Activated T-helper 2 cell treated with anti-CD3 and anti-CD28 coated beads, Interferon-gamma antibody, Interleukin-2, Interleukin-4, amounts not matched to agents 10 μg/mL and 5 μg/mL and 100 μg/mL, durations not matched to agents 14 hours and 24 hours and 36 hours (primary cell): ENCODE measurements at regions of chr14 and their contacts with region 1.

Region 1: GRCh38 chr14:50003213-50004031 is 110.5 kb downstream of the ARF6 start:
- DNase-seq: peak; percentile 76
- H3K4me3 Mint-ChIP-seq: peak overlapping the region; percentile 83
- H3K27ac Mint-ChIP-seq: peak overlapping the region; percentile 98
- H3K4me1 Mint-ChIP-seq: peaks cover 34% of the 10 kb centered on the region
- H3K27me3 Mint-ChIP-seq: no peaks in the 10 kb centered on the region

Region 2: DNA sequence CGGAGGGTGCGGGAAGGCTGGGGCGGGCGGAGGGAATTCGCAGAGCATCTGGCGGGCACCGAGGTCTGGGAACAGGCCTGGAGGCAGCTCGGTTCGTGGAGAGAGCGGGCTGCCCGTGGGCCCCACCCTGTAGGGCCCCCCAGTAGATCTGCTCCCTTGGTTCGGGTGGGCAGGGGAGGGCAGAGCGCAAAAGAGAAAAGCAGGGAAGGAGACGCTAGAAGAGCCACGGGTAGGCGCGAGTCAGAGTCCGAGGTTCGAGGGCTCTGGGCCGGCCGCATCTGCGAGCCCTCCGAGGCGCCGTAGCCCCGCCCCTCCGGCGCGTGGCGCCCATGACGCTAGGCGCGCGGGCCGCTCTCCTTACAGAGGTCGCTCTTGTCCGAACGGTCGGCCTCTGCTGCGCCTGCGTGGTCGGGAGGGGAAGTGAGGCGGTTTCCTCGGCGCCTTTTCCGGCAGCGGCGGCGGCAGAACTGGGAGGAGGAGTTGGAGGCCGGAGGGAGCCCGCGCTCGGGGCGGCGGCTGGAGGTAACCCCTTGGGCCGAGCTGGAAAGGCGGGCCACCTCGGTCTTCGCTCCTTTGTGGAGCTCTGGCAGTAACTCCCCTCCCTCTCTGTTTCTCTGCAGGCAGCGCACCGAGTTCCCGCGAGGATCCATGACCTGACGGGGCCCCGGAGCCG is 110.7 kb before region 1 on chr14 and contains the start of gene ARF6:
- intact Hi-C with region 1: loop called (anchors 1 kb)
- DNase-seq: peak; percentile 98
- H3K4me3 Mint-ChIP-seq: peak within 1 kb of the TSS; percentile 99
- H3K27ac Mint-ChIP-seq: peak within 1 kb of the TSS; percentile 99
- H3K4me1 Mint-ChIP-seq: peaks cover 26% of the 10 kb centered on the region
- H3K27me3 Mint-ChIP-seq: no peaks in the 10 kb centered on the region
- total RNA-seq, gene ARF6: 162 and 165 TPM in 2 replicates

Region 3: DNA sequence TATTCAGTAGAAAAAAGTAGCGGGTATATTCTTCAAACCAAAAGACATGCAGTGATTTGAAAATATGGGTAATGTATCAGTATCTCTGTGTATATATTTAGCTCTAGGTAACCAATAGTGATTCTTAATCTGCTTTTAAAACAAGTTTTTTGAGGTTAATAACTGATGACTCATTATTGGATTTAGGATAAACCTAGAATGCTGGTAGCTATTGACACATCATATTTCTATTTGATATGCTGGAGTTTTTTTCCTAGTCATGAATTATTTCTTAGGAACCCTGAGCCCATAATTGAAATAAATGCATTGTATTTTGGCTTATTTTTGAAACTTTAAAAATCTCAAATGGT is 95.0 kb before region 1 on chr14:
- intact Hi-C with region 1: no loop called
- DNase-seq: no peak
- H3K4me3 Mint-ChIP-seq: no peak overlapping the region
- H3K27ac Mint-ChIP-seq: no peak overlapping the region
- H3K4me1 Mint-ChIP-seq: peaks cover 30% of the 10 kb centered on the region
- H3K27me3 Mint-ChIP-seq: no peaks in the 10 kb centered on the region

Region 4: DNA sequence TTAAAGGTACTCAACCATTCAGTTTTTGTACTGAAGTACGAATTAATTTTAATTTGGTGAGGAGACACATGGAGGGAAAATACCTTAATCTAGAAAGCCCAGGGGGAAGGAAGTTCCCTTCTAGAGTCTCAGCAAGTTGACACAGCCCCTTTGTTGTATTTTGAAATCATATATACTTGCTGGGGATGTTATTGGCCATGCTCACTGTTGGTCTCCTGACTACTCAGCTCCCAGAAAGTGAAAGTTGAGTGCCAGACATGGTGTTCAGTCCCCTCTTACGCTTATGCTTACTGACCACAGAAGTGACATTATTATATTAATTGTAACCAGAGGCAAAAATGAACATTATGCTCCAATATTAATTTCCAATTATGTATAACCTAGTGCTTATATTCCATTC is 82.5 kb before region 1 on chr14:
- intact Hi-C with region 1: no loop called
- DNase-seq: no peak
- H3K4me3 Mint-ChIP-seq: no peak overlapping the region
- H3K27ac Mint-ChIP-seq: no peak overlapping the region
- H3K4me1 Mint-ChIP-seq: peaks cover 10% of the 10 kb centered on the region
- H3K27me3 Mint-ChIP-seq: no peaks in the 10 kb centered on the region

Region 5: DNA sequence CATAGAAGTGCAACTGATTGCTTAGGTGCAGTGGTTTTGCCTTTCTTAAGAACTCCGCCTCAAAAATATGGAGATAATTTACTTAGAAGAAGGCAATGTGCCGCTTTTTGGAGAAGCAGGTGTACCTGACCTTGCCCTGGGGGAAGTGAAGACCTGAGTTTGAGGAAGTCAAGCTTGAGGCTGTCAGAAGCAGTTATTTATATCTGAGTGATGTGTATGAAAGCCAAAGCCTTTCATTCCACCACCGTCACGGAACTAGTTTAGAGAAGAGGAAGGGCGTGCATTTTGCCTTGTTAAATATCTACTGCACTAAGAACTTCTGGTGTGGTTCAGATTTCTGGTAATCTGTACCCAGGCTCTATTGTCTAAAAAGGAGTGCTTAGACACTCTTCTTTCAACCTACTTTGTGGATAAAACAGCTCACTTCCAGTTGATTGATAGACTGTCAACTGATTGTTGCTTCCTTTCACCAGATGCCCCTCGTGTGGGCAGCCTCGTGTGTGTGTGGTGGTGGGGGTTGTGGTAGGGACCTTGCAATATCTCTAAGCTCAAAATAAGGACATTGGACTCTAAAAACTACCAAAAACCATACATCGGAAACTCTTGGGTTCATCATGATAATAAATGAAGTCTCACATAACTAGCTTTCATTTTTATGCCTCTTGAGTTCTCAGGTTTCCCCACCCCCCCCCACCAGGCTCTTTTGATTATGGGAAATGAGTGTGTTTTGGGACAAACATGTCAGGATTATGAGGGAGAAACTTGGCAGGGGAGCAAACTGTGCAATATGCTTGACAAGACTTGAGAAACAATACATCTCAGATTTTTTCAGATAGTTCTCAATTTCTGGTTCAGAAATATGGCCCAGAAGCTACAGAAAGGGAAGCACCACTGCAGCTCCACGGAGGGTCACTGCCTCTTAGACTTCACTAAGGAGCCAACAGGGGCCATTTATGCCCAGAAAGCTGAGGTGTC is 32.0 kb before region 1 on chr14:
- intact Hi-C with region 1: loop called (anchors 1 kb)
- DNase-seq: peak; percentile 42
- H3K4me3 Mint-ChIP-seq: peak overlapping the region; percentile 77
- H3K27ac Mint-ChIP-seq: peak overlapping the region; percentile 99
- H3K4me1 Mint-ChIP-seq: peaks cover 46% of the 10 kb centered on the region
- H3K27me3 Mint-ChIP-seq: no peaks in the 10 kb centered on the region

Region 6: DNA sequence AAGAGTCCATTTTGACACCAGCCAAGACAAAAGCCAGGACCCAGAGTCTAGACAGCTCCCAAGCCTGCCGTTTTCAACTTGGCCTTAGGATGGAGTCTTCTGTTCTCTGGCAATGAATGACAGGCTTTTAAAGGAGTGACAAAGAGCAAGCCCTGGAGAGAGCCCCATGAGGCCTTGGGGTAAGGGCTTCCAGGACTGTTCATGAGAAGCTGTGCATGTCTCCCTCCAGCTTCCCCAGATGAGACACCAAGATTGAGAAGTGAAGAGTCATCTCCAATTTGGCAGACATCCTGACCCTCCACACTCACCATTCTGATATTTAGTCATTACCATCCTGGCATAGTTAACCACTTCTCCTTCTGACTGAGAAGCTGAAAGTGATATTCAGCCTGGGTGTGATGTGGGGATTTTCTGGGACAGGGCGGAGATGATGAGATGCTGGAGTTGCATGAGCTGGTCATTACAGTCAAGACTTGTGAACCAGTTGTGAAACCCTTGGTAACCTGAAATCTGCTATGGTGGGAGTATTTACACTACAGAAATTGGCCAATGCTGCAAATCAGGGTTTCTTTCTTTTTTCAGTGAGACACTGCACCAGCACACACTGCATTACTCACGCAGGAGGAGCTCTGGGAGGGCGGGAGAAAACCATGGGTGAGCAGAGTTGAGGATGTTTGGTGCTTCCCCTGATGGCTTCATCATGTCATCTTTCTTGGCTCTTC is 35.1 kb after region 1 on chr14:
- intact Hi-C with region 1: loop called (anchors 1 kb)
- DNase-seq: peak; percentile 58
- H3K4me3 Mint-ChIP-seq: peak overlapping the region; percentile 68
- H3K27ac Mint-ChIP-seq: peak overlapping the region; percentile 97
- H3K4me1 Mint-ChIP-seq: peaks cover 48% of the 10 kb centered on the region
- H3K27me3 Mint-ChIP-seq: no peaks in the 10 kb centered on the region

Region 7: GRCh38 chr14:50051086-50051485 is 47.7 kb after region 1 on chr14:
- intact Hi-C with region 1: no loop called
- DNase-seq: no peak
- H3K4me3 Mint-ChIP-seq: no peak overlapping the region
- H3K27ac Mint-ChIP-seq: no peak overlapping the region
- H3K4me1 Mint-ChIP-seq: peaks cover 15% of the 10 kb centered on the region
- H3K27me3 Mint-ChIP-seq: no peaks in the 10 kb centered on the region

Region 8: DNA sequence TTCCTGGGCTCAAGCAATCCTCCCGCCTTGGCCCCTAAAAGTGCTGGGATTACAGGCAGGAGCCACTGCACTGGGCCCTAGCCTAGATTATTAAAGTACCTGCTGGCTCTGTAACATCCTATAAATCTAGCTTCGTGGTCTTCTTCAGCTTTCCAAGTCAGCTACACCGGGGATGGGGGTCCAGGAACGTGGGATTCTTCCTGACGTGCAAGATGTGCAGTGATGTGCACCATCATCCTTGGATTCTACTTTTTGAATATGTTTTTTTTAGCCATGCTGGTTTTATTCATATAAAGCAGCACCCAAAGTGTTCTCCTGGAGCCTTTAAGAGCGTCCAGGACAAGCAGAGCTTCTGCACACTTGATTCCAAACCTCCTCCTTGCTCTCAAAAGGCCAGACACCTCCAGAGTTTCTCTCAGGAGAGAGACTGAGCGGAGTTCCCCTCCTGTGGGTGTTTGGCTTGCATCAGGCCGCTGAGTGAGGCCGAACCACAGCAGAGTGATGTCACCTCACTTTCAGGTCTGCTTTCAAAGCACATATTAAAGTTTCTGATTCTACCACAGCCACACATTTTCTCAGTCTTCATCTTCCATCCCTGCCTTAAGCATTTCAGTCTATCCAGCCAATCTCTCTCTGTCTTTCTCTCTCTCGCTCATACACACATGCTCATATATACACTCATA is 79.5 kb after region 1 on chr14:
- intact Hi-C with region 1: loop called (anchors 1 kb)
- DNase-seq: peak; percentile 81
- H3K4me3 Mint-ChIP-seq: peak overlapping the region; percentile 49
- H3K27ac Mint-ChIP-seq: peak overlapping the region; percentile 91
- H3K4me1 Mint-ChIP-seq: peaks cover 62% of the 10 kb centered on the region
- H3K27me3 Mint-ChIP-seq: no peaks in the 10 kb centered on the region

Region 9: GRCh38 chr14:50311975-50312733 is 308.7 kb after region 1 on chr14 and contains the starts of genes DMAC2L and L2HGDH:
- intact Hi-C with region 1: loop called (anchors 2 kb)
- DNase-seq: peak; percentile 89
- H3K4me3 Mint-ChIP-seq: peak within 1 kb of the TSS; percentile 91
- H3K27ac Mint-ChIP-seq: peak within 1 kb of the TSS; percentile 98
- H3K4me1 Mint-ChIP-seq: peaks cover 47% of the 10 kb centered on the region
- H3K27me3 Mint-ChIP-seq: no peaks in the 10 kb centered on the region
- total RNA-seq, gene DMAC2L: 13.6 and 16.2 TPM in 2 replicates
- total RNA-seq, gene L2HGDH: 14.1 and 14.2 TPM in 2 replicates